Activated CD8-positive, alpha-beta memory T cell treated with anti-CD3 and anti-CD28 coated beads, Interleukin-2, amount 10 ng/mL, durations not matched to agents 7 days and 5 days (primary cell): ENCODE measurements at regions of chr5 and their contacts with region 1.

Region 1: DNA sequence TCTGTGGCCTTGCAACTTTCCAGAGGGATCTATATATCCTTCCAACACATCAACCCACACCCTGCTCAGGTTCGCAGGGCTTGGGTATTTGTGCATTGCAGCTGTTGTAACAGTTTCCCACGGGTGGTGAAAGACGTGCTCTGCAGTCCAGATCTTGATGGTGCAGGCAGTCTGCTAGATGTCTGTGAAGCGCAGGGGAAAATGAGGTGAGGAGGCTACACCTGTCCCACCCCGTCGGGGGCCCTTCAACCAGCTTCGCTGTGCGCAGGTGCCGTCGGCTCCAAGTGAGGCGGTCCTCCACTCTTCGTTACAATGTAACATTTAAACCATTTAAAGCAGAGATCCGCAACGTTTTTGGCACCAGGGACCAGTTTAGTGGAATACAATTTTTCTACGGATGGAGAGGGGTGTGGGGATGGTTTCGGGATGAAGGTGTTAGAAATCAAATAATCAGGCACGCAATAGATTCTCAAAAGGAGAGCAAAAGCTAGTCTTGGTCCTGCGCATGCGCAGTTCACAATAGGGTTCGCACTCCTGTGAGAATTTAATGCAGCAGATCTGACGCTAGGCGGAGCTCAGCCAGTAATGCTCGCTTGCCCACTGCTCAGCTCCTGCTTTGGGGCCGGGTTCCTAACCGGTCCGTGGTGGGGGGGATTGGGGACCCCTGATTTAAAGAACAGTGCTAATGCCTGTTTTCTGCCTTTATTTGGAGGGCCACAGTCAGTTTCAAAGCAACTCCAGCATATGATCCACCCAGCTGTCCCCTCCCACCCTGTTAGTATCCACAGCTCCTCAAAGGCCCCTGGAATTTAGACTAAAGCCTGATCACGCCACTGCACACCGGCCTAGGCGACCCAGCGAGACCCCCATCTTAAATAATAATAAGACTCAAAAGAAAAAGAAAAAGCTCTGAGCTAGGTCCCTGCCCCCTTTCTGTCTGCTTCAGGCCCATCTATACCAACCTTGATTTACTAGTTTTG is 97.1 kb upstream of the SELENOP start:
- DNase-seq: peak; percentile 94
- ATAC-seq: peak; percentile 95
- H3K4me3 Mint-ChIP-seq: peak overlapping the region; percentile 90
- H3K27ac Mint-ChIP-seq: peak overlapping the region; percentile 79
- H3K4me1 Mint-ChIP-seq: peaks cover 17% of the 10 kb centered on the region
- H3K27me3 Mint-ChIP-seq: peaks cover 30% of the 10 kb centered on the region

Region 2: GRCh38 chr5:42889311-42889933 is 19.4 kb before region 1 on chr5:
- CTCF ChIA-PET with region 1: interaction called, 13 read pairs
- DNase-seq: peak; percentile 80
- ATAC-seq: peak; percentile 94
- H3K4me3 Mint-ChIP-seq: no peak overlapping the region
- H3K27ac Mint-ChIP-seq: no peak overlapping the region
- H3K4me1 Mint-ChIP-seq: no peaks in the 10 kb centered on the region
- H3K27me3 Mint-ChIP-seq: peaks cover 13% of the 10 kb centered on the region

Region 3: DNA sequence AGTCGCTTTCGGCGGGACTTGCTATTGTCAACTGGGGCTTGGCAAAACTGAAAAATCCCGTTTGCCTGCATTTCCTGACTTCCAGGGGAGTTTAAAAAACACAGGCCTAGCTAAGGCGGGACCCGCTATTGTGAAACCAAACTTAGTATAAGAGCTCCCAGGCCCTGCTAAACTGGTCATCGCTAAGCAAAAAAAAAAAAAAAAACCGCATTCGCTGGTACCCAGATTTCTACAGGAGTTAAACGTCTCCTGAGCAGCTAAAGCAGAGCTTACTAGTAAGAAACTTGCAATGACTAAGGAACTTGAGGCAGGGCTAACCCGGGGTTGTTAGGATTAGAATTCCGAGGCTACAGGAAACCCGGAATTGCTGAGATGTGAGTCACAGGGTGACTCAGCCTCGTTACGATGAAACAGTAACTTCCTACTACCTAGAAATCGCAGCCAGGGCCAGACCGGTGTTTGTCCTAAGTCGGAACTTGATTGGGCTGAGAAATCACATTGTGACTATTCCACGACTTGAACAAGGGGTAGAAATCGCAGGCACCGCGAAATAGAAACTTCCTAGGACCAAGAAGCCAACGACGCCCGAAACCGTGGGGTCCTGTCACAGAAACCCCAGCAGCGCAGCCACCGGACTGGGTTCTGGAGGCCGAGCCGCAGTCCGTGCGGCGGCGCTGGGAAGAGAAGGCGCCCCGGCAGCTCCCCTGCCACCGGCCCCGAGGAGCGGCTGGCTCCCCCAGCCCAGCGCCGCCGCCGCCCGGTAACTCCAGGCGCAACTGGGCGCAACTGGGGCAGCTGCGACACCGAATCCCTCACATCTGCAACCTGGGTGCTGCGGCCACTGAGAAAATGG is 41.9 kb after region 1 on chr5:
- CTCF ChIA-PET with region 1: interaction called, 44 read pairs
- DNase-seq: peak; percentile 85
- ATAC-seq: peak; percentile 60
- H3K4me3 Mint-ChIP-seq: peak overlapping the region; percentile 83
- H3K27ac Mint-ChIP-seq: peak overlapping the region; percentile 99
- H3K4me1 Mint-ChIP-seq: peaks cover 33% of the 10 kb centered on the region
- H3K27me3 Mint-ChIP-seq: no peaks in the 10 kb centered on the region

Region 4: DNA sequence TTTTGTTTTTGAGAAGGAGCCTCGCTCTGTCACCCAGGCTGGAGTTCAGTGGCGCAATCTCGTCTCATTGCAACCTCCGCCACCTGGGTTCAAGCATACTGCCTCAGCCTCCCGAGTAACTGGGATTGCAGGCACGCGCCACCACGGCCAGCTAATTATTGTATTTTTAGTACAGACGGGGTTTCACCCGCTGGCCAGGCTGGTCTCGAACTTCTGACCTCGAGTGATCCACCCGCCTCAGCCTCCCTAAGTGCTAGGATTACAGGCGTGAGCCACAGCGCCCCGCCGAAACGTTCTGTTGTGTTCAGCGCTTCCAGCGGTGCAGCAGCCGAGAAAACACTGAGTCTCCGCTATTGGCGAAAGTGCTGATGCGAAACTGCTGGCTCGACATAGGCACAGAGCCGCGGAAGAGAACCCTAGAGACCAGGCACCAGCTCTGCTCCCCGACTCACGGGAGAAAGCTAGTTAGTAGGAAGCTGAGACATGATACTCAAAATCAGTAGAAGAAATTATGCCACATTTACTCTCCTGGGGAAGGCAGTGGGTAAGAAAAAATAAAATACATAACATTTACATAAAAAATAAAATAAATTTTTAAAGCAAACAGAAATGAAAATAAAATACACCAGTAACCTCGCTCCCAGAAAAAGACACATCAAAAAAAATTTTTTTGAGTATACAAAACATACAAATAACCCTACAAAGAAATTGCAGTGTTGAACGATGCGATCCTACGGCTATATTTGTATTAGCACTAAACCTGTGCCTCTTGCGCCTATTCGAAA is 99.8 kb after region 1 on chr5:
- CTCF ChIA-PET with region 1: interaction called, 11 read pairs
- DNase-seq: peak; percentile 95
- ATAC-seq: peak; percentile 65
- H3K4me3 Mint-ChIP-seq: peak overlapping the region; percentile 90
- H3K27ac Mint-ChIP-seq: peak overlapping the region; percentile 97
- H3K4me1 Mint-ChIP-seq: peaks cover 37% of the 10 kb centered on the region
- H3K27me3 Mint-ChIP-seq: peaks cover 2% of the 10 kb centered on the region